ENCODE measurements at regions of chr9 and their contacts with region 1.

Region 1: DNA sequence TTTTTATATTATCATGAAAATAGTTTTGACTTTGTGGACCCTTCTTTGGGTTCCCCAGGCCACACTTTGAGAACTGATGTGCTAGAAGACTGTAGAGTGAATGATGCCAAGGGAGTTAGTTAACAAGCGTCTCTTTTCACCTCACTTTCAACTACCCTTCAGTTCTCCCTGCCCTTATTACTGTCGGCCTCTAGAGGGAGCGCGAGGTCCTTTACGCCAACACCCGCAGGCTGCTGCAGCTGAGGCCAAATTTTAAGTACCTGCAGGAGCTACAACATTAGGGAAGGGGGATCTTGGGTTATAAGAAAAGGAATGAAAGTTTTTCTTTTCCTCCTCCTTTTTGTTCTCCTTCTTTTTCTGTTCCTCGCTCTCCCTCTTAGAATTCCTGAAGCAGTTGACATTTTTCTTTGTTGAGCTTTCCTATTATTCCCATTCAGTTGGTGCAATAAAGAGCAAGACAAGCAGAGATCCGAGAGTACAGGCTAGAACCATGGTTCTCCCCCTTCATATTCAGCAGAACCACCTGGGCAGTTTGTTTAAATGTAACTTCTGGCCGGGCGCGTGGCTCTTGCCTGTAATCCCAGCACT is 84.0 kb downstream of the ZFAND5 start:
- DNase-seq: peak; percentile 78
- ATAC-seq: peak; percentile 82
- H3K4me3 Mint-ChIP-seq: no peak overlapping the region
- H3K27ac Mint-ChIP-seq: no peak overlapping the region
- H3K4me1 Mint-ChIP-seq: no peaks in the 10 kb centered on the region
- H3K27me3 Mint-ChIP-seq: peaks cover 6% of the 10 kb centered on the region

Region 2: GRCh38 chr9:72038890-72039410 is 242.1 kb before region 1 on chr9:
- CTCF ChIA-PET with region 1: interaction called, 16 read pairs
- DNase-seq: peak; percentile 69
- ATAC-seq: peak; percentile 83
- H3K4me3 Mint-ChIP-seq: no peak overlapping the region
- H3K27ac Mint-ChIP-seq: no peak overlapping the region
- H3K4me1 Mint-ChIP-seq: peaks cover 4% of the 10 kb centered on the region
- H3K27me3 Mint-ChIP-seq: peaks cover 20% of the 10 kb centered on the region

Region 3: DNA sequence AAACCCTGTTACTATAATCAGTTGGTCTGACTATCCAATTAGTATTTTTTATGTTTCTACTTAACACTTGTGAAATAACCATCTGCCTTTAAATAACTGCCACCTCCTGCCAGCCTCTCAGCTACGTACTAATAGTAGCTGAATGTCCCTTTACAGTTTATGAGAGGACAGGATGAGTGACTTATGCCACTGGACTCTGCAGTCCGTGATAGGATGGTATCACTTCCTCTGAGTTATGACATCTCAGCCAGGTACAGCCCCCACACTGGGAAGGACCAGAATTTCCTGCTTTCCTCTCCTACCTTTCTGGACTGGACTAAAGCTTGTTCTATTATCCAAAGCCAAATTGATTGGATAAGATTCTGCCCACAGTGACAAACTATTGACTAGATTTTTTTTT is 18.9 kb before region 1 on chr9:
- CTCF ChIA-PET with region 1: no interaction called
- DNase-seq: no peak
- ATAC-seq: no peak
- H3K4me3 Mint-ChIP-seq: no peak overlapping the region
- H3K27ac Mint-ChIP-seq: no peak overlapping the region
- H3K4me1 Mint-ChIP-seq: no peaks in the 10 kb centered on the region
- H3K27me3 Mint-ChIP-seq: peaks cover 10% of the 10 kb centered on the region

Region 4: GRCh38 chr9:72294936-72295335 is 13.9 kb after region 1 on chr9:
- CTCF ChIA-PET with region 1: interaction called, 15 read pairs
- DNase-seq: no peak
- ATAC-seq: no peak
- H3K4me3 Mint-ChIP-seq: no peak overlapping the region
- H3K27ac Mint-ChIP-seq: no peak overlapping the region
- H3K4me1 Mint-ChIP-seq: peaks cover 3% of the 10 kb centered on the region
- H3K27me3 Mint-ChIP-seq: peaks cover 6% of the 10 kb centered on the region

Region 5: DNA sequence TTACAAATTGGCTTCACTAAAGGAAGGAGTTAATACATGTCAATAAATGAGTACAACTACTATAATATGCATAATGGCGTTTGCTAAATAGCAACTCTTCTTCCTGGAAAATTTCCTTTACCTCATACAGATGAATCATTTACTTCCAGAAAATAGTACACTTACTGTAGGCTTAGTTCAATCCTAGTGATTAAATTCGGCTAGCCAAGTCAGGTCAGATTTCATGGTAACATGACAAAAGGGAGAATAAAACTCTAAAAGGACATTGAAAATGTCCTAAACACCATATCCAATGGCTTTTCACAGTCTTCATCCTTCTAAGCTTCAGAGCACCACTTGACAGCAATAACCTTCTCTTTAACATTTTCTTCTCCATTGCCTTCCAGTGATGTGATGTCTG is 126.1 kb after region 1 on chr9:
- CTCF ChIA-PET with region 1: no interaction called
- DNase-seq: no peak
- ATAC-seq: no peak
- H3K4me3 Mint-ChIP-seq: no peak overlapping the region
- H3K27ac Mint-ChIP-seq: no peak overlapping the region
- H3K4me1 Mint-ChIP-seq: no peaks in the 10 kb centered on the region
- H3K27me3 Mint-ChIP-seq: no peaks in the 10 kb centered on the region

Region 6: GRCh38 chr9:72592502-72593403 is 311.7 kb after region 1 on chr9:
- CTCF ChIA-PET with region 1: interaction called, 22 read pairs
- DNase-seq: no peak
- ATAC-seq: peak; percentile 77
- H3K4me3 Mint-ChIP-seq: no peak overlapping the region
- H3K27ac Mint-ChIP-seq: no peak overlapping the region
- H3K4me1 Mint-ChIP-seq: peaks cover 39% of the 10 kb centered on the region
- H3K27me3 Mint-ChIP-seq: no peaks in the 10 kb centered on the region

Region 7: GRCh38 chr9:72826996-72827949 is 546.3 kb after region 1 on chr9:
- CTCF ChIA-PET with region 1: interaction called, 15 read pairs
- DNase-seq: no peak
- ATAC-seq: no peak
- H3K4me3 Mint-ChIP-seq: no peak overlapping the region
- H3K27ac Mint-ChIP-seq: no peak overlapping the region
- H3K4me1 Mint-ChIP-seq: no peaks in the 10 kb centered on the region
- H3K27me3 Mint-ChIP-seq: peaks cover 12% of the 10 kb centered on the region

Measured in activated CD8-positive, alpha-beta memory T cell treated with anti-CD3 and anti-CD28 coated beads, Interleukin-2, amount 10 ng/mL, durations not matched to agents 7 days and 5 days (primary cell).